ENCODE measurements at regions of chr4 and their contacts with region 1.

Region 1: DNA sequence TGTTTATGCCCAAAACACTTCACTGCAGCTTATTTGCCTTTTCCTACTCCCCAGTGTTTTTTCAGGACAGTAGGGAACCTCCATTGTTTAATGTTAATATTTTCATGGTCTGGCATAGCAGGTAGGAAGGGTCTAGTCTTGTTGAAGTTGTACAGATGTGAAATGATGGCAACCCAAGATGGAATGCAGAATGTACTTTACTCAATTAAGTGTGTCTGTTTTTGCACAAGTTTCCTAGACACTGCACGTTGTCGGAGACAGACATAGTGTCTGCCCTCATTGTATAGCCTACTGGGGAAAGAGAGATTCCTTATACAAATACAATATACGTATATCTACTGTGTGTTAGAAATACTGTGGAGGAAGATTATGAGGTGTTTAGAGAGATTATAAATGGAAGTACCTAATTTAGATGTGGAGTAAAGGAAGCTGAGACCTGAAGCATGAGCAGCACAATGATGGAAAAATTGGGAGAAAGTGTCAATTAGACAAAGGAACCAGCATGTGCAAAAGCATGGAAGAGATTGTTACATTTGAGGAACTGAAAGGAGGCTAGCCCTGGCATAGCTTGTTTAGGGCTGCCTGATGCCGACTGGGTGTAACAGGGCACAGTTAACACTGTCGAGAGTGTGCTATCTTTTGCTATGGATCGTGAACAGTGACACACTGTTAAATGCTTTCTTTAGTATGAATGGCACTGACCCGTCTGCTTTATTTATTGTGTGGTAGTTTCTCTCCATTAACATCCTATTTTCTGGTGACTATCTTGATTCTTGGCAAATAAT is 18.4 kb downstream of the CPEB2 start:
- DNase-seq: peak; percentile 25
- ATAC-seq: peak; percentile 87
- H3K4me3 ChIP-seq: no peak overlapping the region
- H3K27ac ChIP-seq: no peak overlapping the region
- H3K4me1 ChIP-seq: peaks cover 4% of the 10 kb centered on the region; the same call in 1 of the 2 replicates
- H3K27me3 ChIP-seq: no peaks in the 10 kb centered on the region
- CTCF ChIP-seq: no peak
- EP300 ChIP-seq: no peak
- POLR2A ChIP-seq: no peak
- RAD21 ChIP-seq: no peak

Region 2: DNA sequence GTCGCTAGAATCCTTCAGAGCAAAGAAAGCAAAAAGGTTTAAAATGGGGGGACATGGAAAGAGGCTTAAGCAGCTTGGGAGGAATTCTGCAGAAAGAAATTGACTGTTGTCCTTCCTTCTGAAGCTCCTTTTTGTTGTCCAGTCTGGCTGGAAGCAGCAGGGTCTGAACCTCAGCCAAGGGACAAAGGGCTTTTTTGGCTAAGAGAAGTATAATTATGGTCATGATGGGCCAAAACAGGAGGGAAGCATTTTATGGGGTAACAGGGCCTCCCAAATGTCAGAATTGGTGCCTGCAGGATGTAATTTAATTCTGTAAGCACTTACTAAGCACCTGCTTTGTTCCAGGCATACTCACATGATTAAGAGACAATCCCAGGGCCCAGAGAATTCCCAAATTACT is 92.7 kb before region 1 on chr4:
- CTCF ChIA-PET with region 1: no interaction called
- POLR2A ChIA-PET with region 1: no interaction called
- RAD21 ChIA-PET with region 1: no interaction called
- SMC1A ChIA-PET with region 1: no interaction called
- in situ Hi-C with region 1: no loop called
- intact Hi-C with region 1: no loop called
- DNase-seq: no peak
- ATAC-seq: no peak
- H3K4me3 ChIP-seq: no peak overlapping the region
- H3K27ac ChIP-seq: no peak overlapping the region
- H3K4me1 ChIP-seq: no peaks in the 10 kb centered on the region
- H3K27me3 ChIP-seq: no peaks in the 10 kb centered on the region
- CTCF ChIP-seq: no peak
- EP300 ChIP-seq: no peak
- POLR2A ChIP-seq: no peak
- RAD21 ChIP-seq: no peak

Region 3: DNA sequence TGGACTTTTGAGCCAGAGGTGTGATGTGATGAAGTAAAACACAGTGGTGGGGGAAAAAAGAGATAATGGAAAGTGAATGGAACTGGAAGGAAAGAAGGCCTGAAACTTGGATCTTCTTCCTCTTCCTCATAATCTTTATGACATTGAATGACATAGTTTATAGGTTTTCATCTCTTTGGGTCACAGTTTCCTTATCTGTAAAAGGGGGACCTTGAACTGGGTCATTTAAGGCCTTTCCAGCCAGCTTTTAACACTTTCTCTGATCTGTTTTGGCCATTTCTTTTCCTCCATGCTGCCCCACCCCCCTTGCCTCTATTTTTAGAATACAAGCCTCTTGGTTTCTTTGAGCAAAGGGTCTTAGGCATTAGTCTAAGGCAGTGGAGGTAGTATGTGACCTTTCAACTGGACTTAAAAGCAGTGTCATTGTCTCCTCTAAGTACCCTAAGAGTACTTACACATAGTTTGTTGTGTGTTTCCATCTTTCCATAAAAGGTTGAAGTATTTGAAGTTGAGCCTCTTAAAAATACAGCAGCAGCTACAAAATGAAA is 10.6 kb before region 1 on chr4:
- CTCF ChIA-PET with region 1: interaction called, 17 read pairs
- POLR2A ChIA-PET with region 1: interaction called, 6 read pairs
- RAD21 ChIA-PET with region 1: interaction called, 8 read pairs
- SMC1A ChIA-PET with region 1: interaction called, 43 read pairs
- in situ Hi-C with region 1: no loop called
- intact Hi-C with region 1: no loop called
- DNase-seq: no peak
- ATAC-seq: peak; percentile 12
- H3K4me3 ChIP-seq: peak overlapping the region; percentile 7; the same call in 1 of the 2 replicates
- H3K27ac ChIP-seq: no peak overlapping the region
- H3K4me1 ChIP-seq: peaks cover 4% of the 10 kb centered on the region
- H3K27me3 ChIP-seq: no peaks in the 10 kb centered on the region
- CTCF ChIP-seq: no peak
- EP300 ChIP-seq: no peak
- POLR2A ChIP-seq: no peak
- RAD21 ChIP-seq: no peak